ENCODE measurements at regions of chr18 and their contacts with region 1.

Region 1: GRCh38 chr18:24817587-24818371 is 357.3 kb downstream of the HRH4 start:
- DNase-seq: no peak
- H3K4me3 ChIP-seq: no peak overlapping the region
- H3K27ac ChIP-seq: no peak overlapping the region
- H3K4me1 ChIP-seq: no peaks in the 10 kb centered on the region
- H3K27me3 ChIP-seq: no peaks in the 10 kb centered on the region
- CTCF ChIP-seq: no peak
- POLR2A ChIP-seq: no peak

Region 2: DNA sequence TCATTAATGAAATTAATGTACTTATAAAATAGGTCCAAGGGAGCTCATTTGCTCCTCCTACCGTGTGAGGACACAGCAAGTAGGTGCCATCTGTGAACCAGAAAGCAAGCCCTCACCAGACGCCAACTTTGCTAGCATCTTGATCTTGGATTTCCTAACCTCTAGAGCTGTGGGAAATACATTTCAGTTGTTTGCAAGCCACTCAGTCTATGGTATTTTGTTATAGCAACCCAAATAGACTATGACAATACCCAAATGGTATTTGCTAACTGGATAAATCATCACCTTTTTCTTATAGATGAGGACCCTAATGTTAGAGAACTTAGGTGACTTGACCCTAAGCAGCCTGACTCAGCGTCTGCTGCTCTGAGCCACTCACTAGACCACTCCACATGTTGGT is 22.3 kb after region 1 on chr18:
- intact Hi-C with region 1: loop called (anchors 1 kb)
- DNase-seq: no peak
- H3K4me3 ChIP-seq: no peak overlapping the region
- H3K27ac ChIP-seq: no peak overlapping the region
- H3K4me1 ChIP-seq: no peaks in the 10 kb centered on the region
- H3K27me3 ChIP-seq: no peaks in the 10 kb centered on the region
- CTCF ChIP-seq: no peak
- POLR2A ChIP-seq: no peak